ENCODE measurements at regions of chr12 and their contacts with region 1.

Region 1: DNA sequence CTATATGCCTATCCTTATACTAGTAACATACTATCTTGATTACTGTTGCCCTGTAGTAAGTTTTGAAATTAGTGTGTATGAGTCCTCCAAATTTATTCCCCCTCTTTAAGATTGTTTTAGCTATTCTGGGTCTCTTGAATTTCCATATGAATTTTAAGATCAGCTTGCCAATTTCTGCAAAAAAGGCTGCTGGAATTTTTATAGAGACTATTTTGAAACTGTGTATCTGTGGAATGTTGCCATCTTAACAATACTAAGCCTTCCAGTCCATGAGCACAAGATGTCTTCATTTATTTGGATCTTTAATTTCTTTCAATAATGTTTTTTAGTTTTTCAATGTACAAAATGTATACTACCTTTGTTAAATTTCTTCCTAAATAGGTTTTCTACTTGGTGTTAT is 79.8 kb upstream of the ETV6 start:
- DNase-seq: no peak
- H3K4me3 ChIP-seq: no peak overlapping the region
- H3K27ac ChIP-seq: no peak overlapping the region
- H3K4me1 ChIP-seq: no peaks in the 10 kb centered on the region
- H3K27me3 ChIP-seq: no peaks in the 10 kb centered on the region
- CTCF ChIP-seq: no peak
- EP300 ChIP-seq: no peak
- POLR2A ChIP-seq: no peak

Region 2: GRCh38 chr12:9750276-9751203 is 1819.2 kb before region 1 on chr12:
- intact Hi-C with region 1: no loop called
- DNase-seq: peak; percentile 15 to 38 (median 25)
- H3K4me3 ChIP-seq: no peak overlapping the region
- H3K27ac ChIP-seq: no peak overlapping the region
- H3K4me1 ChIP-seq: no peaks in the 10 kb centered on the region
- H3K27me3 ChIP-seq: no peaks in the 10 kb centered on the region
- CTCF ChIP-seq: peak; percentile 54 to 65 (median 57)
- EP300 ChIP-seq: no peak
- POLR2A ChIP-seq: no peak

Region 3: DNA sequence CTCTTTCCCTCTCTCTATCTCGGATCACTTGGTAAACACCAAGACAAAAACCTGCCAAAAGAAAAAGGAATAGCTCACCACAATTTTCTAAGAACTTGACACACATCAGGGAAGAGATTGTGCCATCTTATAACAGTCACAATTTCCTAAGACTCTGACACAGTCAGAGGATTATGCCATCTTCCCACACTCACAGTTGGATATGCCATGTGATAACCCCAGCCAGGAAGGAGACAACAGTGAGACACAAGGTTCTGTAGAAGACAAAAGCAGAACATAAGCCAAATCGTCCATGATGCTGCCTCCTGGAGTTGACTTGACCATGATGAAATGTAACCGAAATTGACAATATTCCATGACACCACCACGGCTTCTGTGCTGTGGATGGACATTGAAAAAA is 1542.0 kb before region 1 on chr12:
- intact Hi-C with region 1: loop called in 1 of 4 experiments (anchors 5 kb)
- DNase-seq: no peak
- H3K4me3 ChIP-seq: no peak overlapping the region
- H3K27ac ChIP-seq: no peak overlapping the region
- H3K4me1 ChIP-seq: no peaks in the 10 kb centered on the region
- H3K27me3 ChIP-seq: no peaks in the 10 kb centered on the region
- CTCF ChIP-seq: no peak
- EP300 ChIP-seq: no peak
- POLR2A ChIP-seq: no peak

Region 4: DNA sequence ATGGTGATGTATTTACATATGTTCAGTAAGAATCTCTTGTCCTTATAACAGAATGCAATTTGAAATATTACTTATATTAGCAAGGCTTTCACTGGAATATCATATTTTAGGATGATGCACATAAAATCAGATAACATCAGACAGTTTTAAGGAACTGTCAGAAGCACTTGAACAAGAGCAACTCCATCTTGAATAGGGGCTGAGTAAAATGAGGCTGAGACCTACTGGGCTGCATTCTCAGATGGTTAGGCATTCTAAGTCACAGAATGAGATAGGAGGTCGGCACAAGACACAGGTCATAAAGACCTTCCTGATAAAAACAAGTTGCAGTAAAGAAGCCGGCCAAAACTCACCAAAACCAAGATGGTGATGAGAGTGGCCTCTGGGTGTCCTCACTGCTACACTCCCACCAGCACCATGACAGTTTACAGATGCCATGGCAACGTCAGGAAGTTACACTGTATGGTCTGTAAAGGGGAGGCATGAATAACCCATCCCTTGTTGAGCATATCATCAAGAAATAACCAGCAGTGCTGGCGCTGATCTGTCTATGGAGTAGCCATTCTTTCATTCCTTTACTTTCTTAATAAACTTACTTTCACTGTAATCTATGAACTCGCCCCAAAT is 52.2 kb after region 1 on chr12:
- intact Hi-C with region 1: no loop called
- DNase-seq: peak in 1 of 5 donors; percentile 19
- H3K4me3 ChIP-seq: no peak overlapping the region
- H3K27ac ChIP-seq: no peak overlapping the region
- H3K4me1 ChIP-seq: no peaks in the 10 kb centered on the region
- H3K27me3 ChIP-seq: no peaks in the 10 kb centered on the region
- CTCF ChIP-seq: no peak
- EP300 ChIP-seq: no peak
- POLR2A ChIP-seq: no peak